ENCODE measurements at regions of chr5 and their contacts with region 1.

Region 1: GRCh38 chr5:169581580-169582227 is 1.9 kb upstream of the SPDL1 start:
- DNase-seq: peak; percentile 24 to 73
- ATAC-seq: peak in 2 of 3 donors; percentile 29 to 32
- H3K4me3 ChIP-seq: no peak overlapping the region
- H3K4me3 Mint-ChIP-seq: peak overlapping the region; percentile 52
- H3K27ac ChIP-seq: no peak overlapping the region
- H3K27ac Mint-ChIP-seq: no peak overlapping the region
- H3K4me1 ChIP-seq: peaks cover 8% of the 10 kb centered on the region
- H3K4me1 Mint-ChIP-seq: peaks cover 4 to 30% of the 10 kb centered on the region in 2 donors
- H3K27me3 ChIP-seq: peaks cover 6% of the 10 kb centered on the region
- H3K27me3 Mint-ChIP-seq: peaks cover 8 to 23% of the 10 kb centered on the region in 2 donors
- CTCF ChIP-seq: peak; percentile 82

Region 2: DNA sequence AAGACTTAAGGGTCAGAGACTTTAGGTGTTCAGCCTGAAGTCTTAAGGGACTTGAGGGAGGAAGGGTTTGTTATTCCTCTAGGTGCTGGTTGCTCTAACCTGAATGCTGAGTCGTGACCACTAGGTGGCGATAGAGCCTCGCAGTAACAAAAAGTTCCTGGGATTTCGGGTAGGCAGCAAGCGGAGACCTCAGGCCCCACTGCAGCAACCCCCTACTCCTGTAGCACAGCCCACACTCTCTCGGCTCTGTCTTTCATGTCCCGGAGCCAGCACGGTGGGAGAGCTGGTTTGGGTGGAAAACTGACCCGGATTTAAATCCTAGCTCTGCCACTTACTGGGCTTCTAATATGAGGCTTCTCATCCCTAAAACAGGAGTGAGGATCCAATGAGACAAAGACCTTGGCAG is 902.2 kb before region 1 on chr5:
- intact Hi-C with region 1: loop called (anchors 1 kb)
- DNase-seq: peak; percentile 38 to 77
- ATAC-seq: peak; percentile 38 to 64 (median 44)
- H3K4me3 ChIP-seq: no peak overlapping the region
- H3K4me3 Mint-ChIP-seq: no peak overlapping the region
- H3K27ac ChIP-seq: no peak overlapping the region
- H3K27ac Mint-ChIP-seq: no peak overlapping the region
- H3K4me1 ChIP-seq: peaks cover 6% of the 10 kb centered on the region
- H3K4me1 Mint-ChIP-seq: peaks cover 0 to 5% of the 10 kb centered on the region in 2 donors
- H3K27me3 ChIP-seq: no peaks in the 10 kb centered on the region
- H3K27me3 Mint-ChIP-seq: peaks cover 0 to 5% of the 10 kb centered on the region in 2 donors
- CTCF ChIP-seq: peak; percentile 89

Region 3: DNA sequence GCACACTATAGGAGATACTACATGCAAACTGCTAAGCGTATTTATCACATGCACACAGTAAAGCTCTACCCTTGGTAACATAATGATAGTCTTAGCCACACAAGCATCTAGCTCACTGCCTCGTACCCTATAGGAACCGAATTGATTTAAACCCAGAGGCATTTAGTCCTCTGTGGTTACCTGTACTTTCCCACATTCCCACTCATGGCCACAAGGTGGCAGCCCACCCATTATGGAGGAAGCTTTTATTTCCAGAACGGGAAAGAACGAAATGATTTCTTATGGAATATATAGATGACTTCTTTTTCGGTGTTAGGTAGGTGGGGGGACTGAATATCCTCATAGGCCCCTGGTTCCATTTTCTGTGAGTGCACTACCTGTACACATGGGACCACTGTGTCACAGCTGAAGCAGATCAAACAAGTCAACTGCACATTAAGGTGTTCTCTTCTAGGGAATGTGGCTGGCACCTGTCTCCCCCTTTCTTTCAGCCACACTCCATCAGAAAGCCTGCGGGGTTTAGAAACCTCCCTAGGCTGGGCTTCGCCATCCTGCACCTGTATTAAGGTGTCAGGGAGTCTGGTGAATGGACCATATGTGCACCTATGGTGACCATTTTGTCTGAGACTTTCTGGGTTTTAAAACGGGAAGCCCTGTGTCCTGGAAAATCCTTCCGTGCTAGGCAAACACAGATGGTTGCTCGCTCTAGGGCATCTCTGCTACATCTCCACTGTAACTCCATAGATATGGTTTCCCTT is 594.0 kb before region 1 on chr5:
- intact Hi-C with region 1: loop called (anchors 2 kb)
- DNase-seq: peak; percentile 27 to 61
- ATAC-seq: peak; percentile 31 to 77 (median 63)
- H3K4me3 ChIP-seq: no peak overlapping the region
- H3K4me3 Mint-ChIP-seq: no peak overlapping the region
- H3K27ac ChIP-seq: no peak overlapping the region
- H3K27ac Mint-ChIP-seq: no peak overlapping the region
- H3K4me1 ChIP-seq: no peaks in the 10 kb centered on the region
- H3K4me1 Mint-ChIP-seq: peaks cover 0 to 4% of the 10 kb centered on the region in 2 donors
- H3K27me3 ChIP-seq: no peaks in the 10 kb centered on the region
- H3K27me3 Mint-ChIP-seq: peaks cover 6 to 19% of the 10 kb centered on the region in 2 donors
- CTCF ChIP-seq: peak; percentile 81

Region 4: GRCh38 chr5:169197343-169197742 is 384.4 kb before region 1 on chr5:
- intact Hi-C with region 1: no loop called
- DNase-seq: no peak
- ATAC-seq: no peak
- H3K4me3 ChIP-seq: no peak overlapping the region
- H3K4me3 Mint-ChIP-seq: no peak overlapping the region
- H3K27ac ChIP-seq: no peak overlapping the region
- H3K27ac Mint-ChIP-seq: no peak overlapping the region
- H3K4me1 ChIP-seq: no peaks in the 10 kb centered on the region
- H3K4me1 Mint-ChIP-seq: no peaks in the 10 kb centered on the region
- H3K27me3 ChIP-seq: no peaks in the 10 kb centered on the region
- H3K27me3 Mint-ChIP-seq: peaks cover 0 to 2% of the 10 kb centered on the region in 2 donors
- CTCF ChIP-seq: no peak

Region 5: GRCh38 chr5:169494941-169495548 is 86.7 kb before region 1 on chr5:
- intact Hi-C with region 1: no loop called
- DNase-seq: no peak
- ATAC-seq: no peak
- H3K4me3 ChIP-seq: no peak overlapping the region
- H3K4me3 Mint-ChIP-seq: no peak overlapping the region
- H3K27ac ChIP-seq: no peak overlapping the region
- H3K27ac Mint-ChIP-seq: no peak overlapping the region
- H3K4me1 ChIP-seq: no peaks in the 10 kb centered on the region
- H3K4me1 Mint-ChIP-seq: no peaks in the 10 kb centered on the region
- H3K27me3 ChIP-seq: no peaks in the 10 kb centered on the region
- H3K27me3 Mint-ChIP-seq: peaks cover 8 to 33% of the 10 kb centered on the region in 2 donors
- CTCF ChIP-seq: no peak

Region 6: GRCh38 chr5:169554251-169554650 is 27.5 kb before region 1 on chr5:
- intact Hi-C with region 1: no loop called
- DNase-seq: no peak
- ATAC-seq: no peak
- H3K4me3 ChIP-seq: no peak overlapping the region
- H3K4me3 Mint-ChIP-seq: no peak overlapping the region
- H3K27ac ChIP-seq: no peak overlapping the region
- H3K27ac Mint-ChIP-seq: no peak overlapping the region
- H3K4me1 ChIP-seq: no peaks in the 10 kb centered on the region
- H3K4me1 Mint-ChIP-seq: no peaks in the 10 kb centered on the region
- H3K27me3 ChIP-seq: peaks cover 3% of the 10 kb centered on the region
- H3K27me3 Mint-ChIP-seq: peaks cover 53 to 71% of the 10 kb centered on the region in 2 donors
- CTCF ChIP-seq: no peak

Region 7: GRCh38 chr5:169742771-169743296 is 161.1 kb after region 1 on chr5:
- intact Hi-C with region 1: no loop called
- DNase-seq: no peak
- ATAC-seq: no peak
- H3K4me3 ChIP-seq: no peak overlapping the region
- H3K4me3 Mint-ChIP-seq: no peak overlapping the region
- H3K27ac ChIP-seq: no peak overlapping the region
- H3K27ac Mint-ChIP-seq: no peak overlapping the region
- H3K4me1 ChIP-seq: no peaks in the 10 kb centered on the region
- H3K4me1 Mint-ChIP-seq: peaks cover 20 to 37% of the 10 kb centered on the region in 2 donors
- H3K27me3 ChIP-seq: no peaks in the 10 kb centered on the region
- H3K27me3 Mint-ChIP-seq: no peaks in the 10 kb centered on the region
- CTCF ChIP-seq: no peak

Measured in natural killer cell (primary cell).